ENCODE measurements at regions of chr4 and their contacts with region 1.

Region 1: DNA sequence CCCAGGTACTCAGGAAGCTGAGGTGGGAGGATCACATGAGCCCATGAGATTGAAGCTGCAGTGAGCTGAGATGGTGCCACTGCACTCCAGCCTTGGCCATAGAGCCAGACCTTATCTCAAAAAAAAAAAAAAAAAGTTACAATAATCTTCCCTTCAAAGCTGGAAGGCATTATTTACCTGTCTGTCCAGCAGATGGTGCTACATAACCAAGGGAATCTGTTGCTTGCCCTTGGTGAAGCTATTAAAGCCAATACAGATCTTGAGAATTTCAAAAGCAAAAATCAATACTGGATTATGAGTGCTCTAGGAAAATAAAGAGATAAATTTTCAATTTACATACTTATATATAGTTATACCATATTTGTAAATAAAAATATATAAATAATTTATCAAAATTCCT is 25.9 kb downstream of the PKD2 start:
- DNase-seq: peak; percentile 39
- H3K4me3 ChIP-seq: no peak overlapping the region
- H3K27ac ChIP-seq: no peak overlapping the region
- H3K27me3 ChIP-seq: no peaks in the 10 kb centered on the region
- CTCF ChIP-seq: peak; percentile 76

Region 2: DNA sequence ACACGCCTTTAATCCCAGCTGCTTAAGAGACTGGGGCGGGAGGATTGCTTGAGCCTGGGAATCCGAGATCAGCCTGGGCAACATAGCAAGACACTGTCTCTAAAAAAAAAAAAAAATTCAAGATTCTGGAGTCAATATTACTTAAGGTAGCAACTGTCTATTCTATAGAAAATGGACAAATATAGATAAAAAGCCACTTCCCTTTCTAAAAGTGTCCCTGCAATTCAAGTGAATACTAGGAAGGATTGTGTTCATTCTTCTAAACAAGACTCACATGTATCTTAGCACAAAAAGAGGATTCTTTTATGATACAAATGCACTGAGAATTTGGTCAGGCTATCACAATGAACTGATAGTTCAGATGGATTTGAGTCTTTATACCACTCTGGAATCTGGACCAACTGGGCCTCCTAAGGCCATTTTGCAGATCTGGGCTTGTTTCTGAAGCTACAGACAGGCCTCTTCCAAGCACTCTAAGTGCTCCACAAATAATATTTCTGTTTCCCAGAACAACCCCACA is 18.9 kb before region 1 on chr4:
- CTCF ChIA-PET with region 1: interaction called, 10 read pairs
- POLR2A ChIA-PET with region 1: no interaction called
- DNase-seq: no peak
- H3K4me3 ChIP-seq: no peak overlapping the region
- H3K27ac ChIP-seq: no peak overlapping the region
- H3K27me3 ChIP-seq: no peaks in the 10 kb centered on the region
- CTCF ChIP-seq: no peak

Region 3: GRCh38 chr4:88054901-88055300 is 21.6 kb after region 1 on chr4:
- CTCF ChIA-PET with region 1: interaction called, 13 read pairs
- POLR2A ChIA-PET with region 1: no interaction called
- DNase-seq: peak; percentile 38
- H3K4me3 ChIP-seq: no peak overlapping the region
- H3K27ac ChIP-seq: no peak overlapping the region
- H3K27me3 ChIP-seq: no peaks in the 10 kb centered on the region
- CTCF ChIP-seq: peak; percentile 76

Region 4: DNA sequence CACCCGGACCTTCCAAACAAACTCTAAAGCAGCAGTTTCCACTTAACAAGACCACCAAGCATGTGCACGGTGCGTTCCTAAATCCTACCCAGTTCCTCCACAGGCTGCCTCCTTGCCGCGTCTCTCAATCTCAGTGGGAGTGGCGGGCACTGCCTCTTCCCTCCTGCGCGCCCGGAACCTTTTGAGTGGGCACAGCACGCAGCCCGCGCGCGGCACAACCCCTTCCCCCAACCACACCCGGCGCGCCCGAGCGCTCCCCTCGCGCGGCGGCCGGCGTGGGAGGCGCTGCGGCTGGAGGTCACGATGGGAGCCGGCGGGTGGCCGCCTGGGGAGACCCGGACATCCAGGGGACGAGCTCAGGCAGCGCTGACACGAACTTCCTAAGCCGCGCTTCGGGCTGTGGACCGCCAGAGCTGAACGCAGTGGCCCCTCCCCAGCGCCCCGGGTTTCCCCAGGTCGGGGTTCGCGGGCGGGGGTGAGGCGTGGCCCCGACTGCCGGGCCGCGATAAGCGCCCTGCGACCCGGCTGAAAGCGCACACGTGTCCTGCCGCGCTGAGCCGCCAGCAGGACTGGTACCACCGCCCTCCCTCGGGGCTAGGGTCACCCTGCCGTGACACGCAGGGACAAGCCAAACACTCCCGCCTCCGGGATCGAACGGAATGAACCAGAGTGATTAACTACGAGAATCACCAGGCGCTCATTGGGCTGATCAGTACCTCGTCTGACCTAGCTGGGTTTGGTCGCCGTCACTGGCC is 125.4 kb after region 1 on chr4 and contains the start of gene ABCG2:
- CTCF ChIA-PET with region 1: no interaction called
- POLR2A ChIA-PET with region 1: no interaction called
- DNase-seq: peak; percentile 23
- H3K4me3 ChIP-seq: peak within 1 kb of the TSS; percentile 71
- H3K27ac ChIP-seq: no peak within 1 kb of the TSS
- H3K27me3 ChIP-seq: no peaks in the 10 kb centered on the region
- CTCF ChIP-seq: no peak
- polyA plus RNA-seq, gene ABCG2: 1.1 and 1.2 TPM in 2 replicates

Region 5: GRCh38 chr4:88211473-88212252 is 178.4 kb after region 1 on chr4:
- CTCF ChIA-PET with region 1: interaction called, 139 read pairs
- POLR2A ChIA-PET with region 1: interaction called, 4 read pairs
- DNase-seq: peak; percentile 11
- H3K4me3 ChIP-seq: no peak overlapping the region
- H3K27ac ChIP-seq: no peak overlapping the region
- H3K27me3 ChIP-seq: peaks cover 3% of the 10 kb centered on the region
- CTCF ChIP-seq: peak; percentile 69

Region 6: GRCh38 chr4:88514557-88515511 is 481.5 kb after region 1 on chr4:
- CTCF ChIA-PET with region 1: interaction called, 17 read pairs
- POLR2A ChIA-PET with region 1: no interaction called
- DNase-seq: no peak
- H3K4me3 ChIP-seq: no peak overlapping the region
- H3K27ac ChIP-seq: no peak overlapping the region
- H3K27me3 ChIP-seq: no peaks in the 10 kb centered on the region
- CTCF ChIP-seq: no peak

Measured in AG04450 (cell line).